AG04450 (cell line): ENCODE measurements at regions of chr20 and their contacts with region 1.

Region 1: DNA sequence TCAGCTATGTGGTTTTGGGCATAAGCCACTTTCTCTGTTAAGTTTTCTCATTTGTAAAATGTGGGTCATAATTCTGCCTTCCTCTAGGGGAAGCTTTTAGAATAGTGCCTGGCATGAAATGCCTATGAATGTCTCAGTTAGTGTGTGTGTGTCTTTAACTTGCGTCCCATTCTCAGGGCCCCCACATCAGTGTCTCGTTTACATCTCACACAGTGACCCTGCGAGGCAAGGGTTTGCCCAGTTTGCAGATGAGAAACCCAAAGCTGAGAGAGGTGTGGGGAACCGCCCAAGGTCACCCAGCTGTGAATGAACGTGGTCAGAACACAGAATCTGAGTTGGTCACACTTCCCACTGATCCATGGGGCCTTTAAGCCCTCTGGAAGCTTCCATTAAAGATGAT is 14.1 kb downstream of the DYNLRB1 start:
- DNase-seq: no peak
- H3K4me3 ChIP-seq: no peak overlapping the region
- H3K27ac ChIP-seq: no peak overlapping the region
- H3K27me3 ChIP-seq: no peaks in the 10 kb centered on the region
- CTCF ChIP-seq: no peak

Region 2: DNA sequence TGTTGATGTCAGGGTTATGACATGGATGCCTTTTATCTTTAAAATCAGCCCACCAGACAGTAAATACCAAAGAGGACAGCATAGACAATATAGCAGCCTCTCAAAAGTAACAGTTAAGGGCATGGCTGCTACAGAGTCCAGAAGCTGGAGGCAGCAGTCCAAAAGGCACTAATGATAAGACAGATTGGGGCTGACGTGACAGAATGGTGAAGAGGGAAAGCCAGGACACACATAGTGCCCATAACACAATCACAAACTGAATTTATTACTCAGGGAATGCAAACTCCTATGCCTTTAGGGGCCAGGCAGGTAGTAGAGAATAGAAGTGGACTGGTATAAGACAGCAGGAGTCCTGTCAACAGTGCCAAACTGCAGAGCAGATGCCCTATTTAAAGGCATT is 214.5 kb after region 1 on chr20:
- CTCF ChIA-PET with region 1: interaction called, 12 read pairs
- POLR2A ChIA-PET with region 1: no interaction called
- DNase-seq: no peak
- H3K4me3 ChIP-seq: no peak overlapping the region
- H3K27ac ChIP-seq: no peak overlapping the region
- H3K27me3 ChIP-seq: no peaks in the 10 kb centered on the region
- CTCF ChIP-seq: no peak

Region 3: DNA sequence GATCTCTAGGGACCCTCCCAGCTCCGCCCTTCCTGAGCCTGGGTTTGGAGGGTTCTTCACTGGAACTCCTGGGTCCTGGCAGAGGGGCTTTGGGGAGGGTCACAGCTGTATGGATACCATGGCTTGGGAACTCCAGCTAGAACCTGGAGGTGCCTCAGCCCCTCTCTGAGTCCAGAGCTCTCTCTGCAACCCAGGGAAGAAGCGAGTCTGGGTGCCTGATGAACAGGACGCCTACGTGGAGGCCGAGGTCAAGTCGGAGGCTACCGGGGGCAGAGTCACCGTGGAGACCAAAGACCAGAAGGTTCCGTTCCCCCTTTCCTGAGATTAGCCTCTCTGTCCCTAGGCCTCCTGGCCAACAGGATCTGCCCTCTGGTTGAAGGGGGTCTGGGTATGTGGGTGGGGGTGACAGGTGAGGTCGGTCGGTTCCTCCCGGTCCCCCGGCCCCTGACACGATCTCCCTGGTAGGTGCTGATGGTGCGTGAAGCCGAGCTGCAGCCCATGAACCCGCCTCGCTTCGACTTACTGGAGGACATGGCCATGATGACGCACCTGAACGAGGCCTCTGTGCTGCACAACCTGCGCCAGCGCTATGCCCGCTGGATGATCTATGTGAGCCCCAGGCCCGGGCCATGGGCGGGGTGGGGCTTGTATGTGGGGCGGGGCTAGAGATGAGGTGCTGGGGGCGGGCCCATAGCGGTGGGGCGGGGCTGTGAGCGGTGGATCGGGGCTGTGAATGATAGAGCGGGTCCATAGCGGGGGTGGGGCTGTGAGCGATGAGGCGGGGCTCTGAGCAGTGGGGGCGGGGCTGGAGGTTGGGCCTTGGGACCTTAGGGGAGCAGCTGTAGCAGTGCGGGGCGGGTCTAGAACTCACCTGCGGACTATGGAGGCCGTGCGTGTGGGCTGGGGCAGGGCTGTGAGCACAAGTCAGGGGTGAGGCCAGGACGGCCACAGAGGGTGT is 449.1 kb after region 1 on chr20:
- CTCF ChIA-PET with region 1: no interaction called
- POLR2A ChIA-PET with region 1: no interaction called
- DNase-seq: no peak
- H3K4me3 ChIP-seq: no peak overlapping the region
- H3K27ac ChIP-seq: no peak overlapping the region
- H3K27me3 ChIP-seq: peaks cover 12% of the 10 kb centered on the region
- CTCF ChIP-seq: no peak